Naive thymus-derived CD4-positive, alpha-beta T cell (primary cell): ENCODE measurements at regions of chr2 and their contacts with region 1.

Region 1: GRCh38 chr2:190432567-190433231 is 24.5 kb downstream of the MFSD6 start:
- DNase-seq: no peak
- ATAC-seq: no peak
- H3K4me3 ChIP-seq: no peak overlapping the region
- H3K4me3 Mint-ChIP-seq: peak overlapping the region in 7 of 10 donors; percentile 1 to 67 (median 10)
- H3K27ac ChIP-seq: no peak overlapping the region
- H3K27ac Mint-ChIP-seq: peak overlapping the region in 7 of 9 donors; percentile 21 to 89 (median 45)
- H3K4me1 ChIP-seq: peaks cover 5 to 28% of the 10 kb centered on the region in 2 donors
- H3K4me1 Mint-ChIP-seq: peaks cover 41 to 74% (median 66%) of the 10 kb centered on the region in 7 donors
- H3K27me3 ChIP-seq: no peaks in the 10 kb centered on the region
- H3K27me3 Mint-ChIP-seq: no peaks in the 10 kb centered on the region

Region 2: DNA sequence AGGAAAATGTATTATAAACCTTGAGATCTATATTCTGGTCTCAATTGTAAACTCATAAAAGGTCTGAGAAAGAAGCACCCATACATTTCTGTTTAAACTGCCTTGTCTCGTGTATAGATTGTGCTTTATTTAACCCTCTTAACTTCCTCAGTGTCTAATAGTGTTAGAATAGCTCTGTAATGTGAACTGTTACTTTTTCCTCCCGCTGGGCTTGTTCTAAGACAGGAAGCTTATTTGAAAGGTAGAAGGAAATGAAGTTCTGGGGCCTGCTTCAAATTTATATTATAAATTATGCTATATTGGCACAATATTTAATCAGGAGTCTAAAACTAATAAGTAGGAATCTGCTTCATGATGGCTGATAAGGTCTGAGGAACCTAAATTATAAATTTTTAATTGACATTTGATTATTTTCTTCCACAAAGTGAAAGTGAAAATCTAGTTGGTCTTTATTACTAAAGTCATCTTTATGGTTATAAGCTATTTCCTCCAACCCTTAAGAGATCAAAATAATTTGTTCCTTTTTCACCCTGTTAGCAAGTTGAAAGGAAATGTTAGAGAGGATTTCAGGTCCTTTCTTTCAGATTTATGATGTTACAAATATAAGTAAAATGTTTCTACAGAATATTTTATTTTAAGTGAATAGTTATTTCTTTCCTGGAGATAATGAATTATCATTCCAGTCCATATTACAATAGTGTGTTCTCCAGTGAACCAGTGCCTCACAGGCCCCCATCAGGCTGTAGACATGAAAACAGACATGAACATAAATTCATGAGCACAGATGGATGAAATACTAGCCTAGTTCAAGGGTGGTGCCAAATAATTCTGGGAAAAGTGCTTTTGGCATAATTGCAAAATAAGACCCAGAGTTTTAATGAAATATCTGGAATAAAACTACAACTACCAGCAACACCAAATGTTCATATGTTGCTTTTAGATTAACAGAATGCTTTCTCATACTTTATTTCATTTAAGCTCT is 16.6 kb before region 1 on chr2:
- CTCF ChIA-PET with region 1: interaction called, 3 read pairs
- POLR2A ChIA-PET with region 1: interaction called, 6 read pairs
- intact Hi-C with region 1: loop called in 1 of 2 experiments (anchors 2 kb)
- DNase-seq: peak in 3 of 9 donors; percentile 30 to 32 (median 31)
- ATAC-seq: peak; percentile 60
- H3K4me3 ChIP-seq: no peak overlapping the region
- H3K4me3 Mint-ChIP-seq: peak overlapping the region in 9 of 10 donors; percentile 44 to 78 (median 64)
- H3K27ac ChIP-seq: peak overlapping the region; percentile 74
- H3K27ac Mint-ChIP-seq: peak overlapping the region; percentile 61 to 93 (median 87)
- H3K4me1 ChIP-seq: peaks cover 24 to 50% of the 10 kb centered on the region in 2 donors
- H3K4me1 Mint-ChIP-seq: peaks cover 51 to 97% (median 91%) of the 10 kb centered on the region in 7 donors
- H3K27me3 ChIP-seq: no peaks in the 10 kb centered on the region
- H3K27me3 Mint-ChIP-seq: no peaks in the 10 kb centered on the region

Region 3: GRCh38 chr2:190615555-190616200 is 183.0 kb after region 1 on chr2:
- CTCF ChIA-PET with region 1: no interaction called
- POLR2A ChIA-PET with region 1: no interaction called
- intact Hi-C with region 1: no loop called
- DNase-seq: no peak
- ATAC-seq: no peak
- H3K4me3 ChIP-seq: no peak overlapping the region
- H3K4me3 Mint-ChIP-seq: no peak overlapping the region
- H3K27ac ChIP-seq: no peak overlapping the region
- H3K27ac Mint-ChIP-seq: no peak overlapping the region
- H3K4me1 ChIP-seq: no peaks in the 10 kb centered on the region
- H3K4me1 Mint-ChIP-seq: peaks cover 0 to 1% (median 0%) of the 10 kb centered on the region in 7 donors
- H3K27me3 ChIP-seq: no peaks in the 10 kb centered on the region
- H3K27me3 Mint-ChIP-seq: no peaks in the 10 kb centered on the region

Region 4: GRCh38 chr2:190684931-190685330 is 252.2 kb after region 1 on chr2:
- CTCF ChIA-PET with region 1: no interaction called
- POLR2A ChIA-PET with region 1: no interaction called
- intact Hi-C with region 1: no loop called
- DNase-seq: no peak
- ATAC-seq: no peak
- H3K4me3 ChIP-seq: no peak overlapping the region
- H3K4me3 Mint-ChIP-seq: no peak overlapping the region
- H3K27ac ChIP-seq: no peak overlapping the region
- H3K27ac Mint-ChIP-seq: no peak overlapping the region
- H3K4me1 ChIP-seq: no peaks in the 10 kb centered on the region
- H3K4me1 Mint-ChIP-seq: peaks cover 5 to 10% (median 7%) of the 10 kb centered on the region in 7 donors
- H3K27me3 ChIP-seq: no peaks in the 10 kb centered on the region
- H3K27me3 Mint-ChIP-seq: no peaks in the 10 kb centered on the region